Left cardiac atrium (tissue), 4 donors: ENCODE measurements at regions of chr3 and their contacts with region 1.

Region 1: DNA sequence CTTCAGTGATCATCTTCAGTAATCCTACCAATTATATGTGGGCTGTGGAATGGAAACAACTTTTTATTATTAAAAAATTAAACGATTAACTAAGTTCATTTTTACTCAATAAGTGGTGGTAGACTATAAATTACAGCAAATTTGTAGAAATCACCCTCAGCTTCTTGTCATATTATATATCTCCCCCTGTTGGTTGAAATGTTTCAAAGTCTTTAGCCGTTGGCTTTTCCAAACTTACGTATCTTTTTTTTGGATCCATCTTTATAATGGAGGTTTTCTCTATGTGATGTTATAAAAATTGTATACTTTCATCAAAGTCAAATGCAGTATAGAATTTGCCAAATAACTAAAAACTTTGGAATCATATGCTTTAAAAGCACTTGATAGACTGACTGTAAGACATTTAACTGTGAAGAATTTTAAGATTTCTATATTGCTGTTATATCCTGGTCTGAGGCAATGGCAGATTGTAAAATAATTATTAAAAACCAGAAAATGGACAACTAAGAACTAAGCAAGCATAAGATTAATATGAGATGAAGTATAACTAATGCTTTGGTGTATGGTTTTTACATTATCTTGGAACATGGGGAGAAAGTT is 44.7 kb downstream of the ATP11B start:
- DNase-seq: no peak
- ATAC-seq: no peak

Region 2: GRCh38 chr3:182713743-182714517 is 124.0 kb before region 1 on chr3:
- intact Hi-C with region 1: loop called (anchors 5 kb)
- DNase-seq: no peak
- ATAC-seq: peak; percentile 90